CD4-positive, alpha-beta memory T cell (primary cell): ENCODE measurements at regions of chr5 and their contacts with region 1.

Region 1: DNA sequence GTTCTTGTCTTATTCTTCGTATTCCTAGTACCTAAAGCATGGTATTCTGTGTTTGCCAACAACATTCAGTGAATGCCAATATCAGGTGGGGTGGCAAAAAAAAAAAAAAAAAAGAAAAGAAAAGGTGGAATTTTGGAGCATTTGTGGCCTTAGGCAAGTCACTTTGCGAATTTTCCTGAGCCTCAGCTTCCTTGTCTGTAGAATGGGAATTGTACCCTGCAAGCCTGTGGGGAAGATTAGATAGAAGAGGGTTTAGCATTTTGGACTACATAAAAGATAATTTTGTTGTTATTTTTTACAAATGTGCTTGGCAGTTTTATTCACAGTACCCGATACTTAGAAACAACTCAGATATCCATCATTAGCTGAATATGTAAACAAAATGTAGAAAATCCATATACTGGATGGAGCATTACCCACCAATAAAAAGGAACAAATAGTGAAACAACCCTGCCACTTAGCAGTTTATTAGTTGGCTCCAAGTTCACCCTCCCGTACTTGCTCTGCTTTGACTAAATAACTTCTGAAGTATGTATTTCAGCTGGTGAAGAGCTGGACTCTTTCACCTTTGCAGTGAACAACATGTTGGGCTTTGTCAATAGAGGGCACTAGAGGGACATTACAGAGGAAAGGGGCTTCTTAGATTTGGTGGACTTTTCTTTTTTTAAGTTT is 13.6 kb downstream of the UBE2D2 start:
- DNase-seq: peak in 4 of 5 donors; percentile 37 to 45 (median 40)
- H3K4me3 ChIP-seq: no peak overlapping the region
- H3K4me3 Mint-ChIP-seq: peak overlapping the region in 6 of 8 donors; percentile 5 to 67 (median 44)
- H3K27ac ChIP-seq: peak overlapping the region; percentile 45
- H3K27ac Mint-ChIP-seq: peak overlapping the region; percentile 7 to 84 (median 64)
- H3K4me1 ChIP-seq: peaks cover 75% of the 10 kb centered on the region
- H3K4me1 Mint-ChIP-seq: peaks cover 54 to 78% (median 67%) of the 10 kb centered on the region in 4 donors
- H3K27me3 ChIP-seq: no peaks in the 10 kb centered on the region
- H3K27me3 Mint-ChIP-seq: no peaks in the 10 kb centered on the region

Region 2: DNA sequence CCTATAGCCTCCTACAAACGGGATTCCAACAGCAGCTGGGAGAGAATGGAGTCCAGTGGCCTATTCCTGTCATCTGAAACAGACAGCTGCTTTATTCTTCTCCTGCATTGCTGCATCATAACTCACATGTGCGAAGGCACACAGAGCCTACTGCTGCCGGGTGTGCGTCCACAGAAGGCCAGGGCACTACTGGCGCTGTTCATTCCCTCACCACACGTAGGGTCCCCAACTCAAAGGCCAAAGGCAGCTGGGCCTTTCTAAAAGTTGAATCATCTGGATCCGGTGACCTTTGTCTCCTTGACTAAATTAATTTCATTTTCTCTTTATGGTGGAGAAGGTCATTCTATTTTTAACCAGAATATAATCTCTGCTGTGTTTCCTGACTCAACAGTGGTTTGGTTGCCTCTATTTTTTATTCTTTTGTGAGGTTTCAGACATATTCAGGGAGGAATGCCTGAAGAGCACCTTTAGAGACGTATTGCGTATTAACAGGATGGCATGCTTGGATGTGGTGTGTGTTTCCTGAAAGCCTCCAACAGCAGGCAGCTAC is 160.1 kb before region 1 on chr5:
- CTCF ChIA-PET with region 1: no interaction called
- POLR2A ChIA-PET with region 1: no interaction called
- intact Hi-C with region 1: no loop called
- DNase-seq: peak in 2 of 5 donors; percentile 23 to 37
- H3K4me3 ChIP-seq: no peak overlapping the region
- H3K4me3 Mint-ChIP-seq: peak overlapping the region; percentile 0 to 66 (median 38)
- H3K27ac ChIP-seq: peak overlapping the region; percentile 3
- H3K27ac Mint-ChIP-seq: peak overlapping the region in 6 of 7 donors; percentile 33 to 85 (median 66)
- H3K4me1 ChIP-seq: peaks cover 31% of the 10 kb centered on the region
- H3K4me1 Mint-ChIP-seq: peaks cover 13 to 33% (median 23%) of the 10 kb centered on the region in 4 donors
- H3K27me3 ChIP-seq: no peaks in the 10 kb centered on the region
- H3K27me3 Mint-ChIP-seq: no peaks in the 10 kb centered on the region

Region 3: GRCh38 chr5:139495638-139496435 is 78.9 kb before region 1 on chr5:
- CTCF ChIA-PET with region 1: no interaction called
- POLR2A ChIA-PET with region 1: no interaction called
- intact Hi-C with region 1: no loop called
- DNase-seq: no peak
- H3K4me3 ChIP-seq: no peak overlapping the region
- H3K4me3 Mint-ChIP-seq: no peak overlapping the region
- H3K27ac ChIP-seq: no peak overlapping the region
- H3K27ac Mint-ChIP-seq: peak overlapping the region in 3 of 7 donors; percentile 24 to 64 (median 43)
- H3K4me1 ChIP-seq: peaks cover 9% of the 10 kb centered on the region
- H3K4me1 Mint-ChIP-seq: peaks cover 6 to 16% (median 11%) of the 10 kb centered on the region in 4 donors
- H3K27me3 ChIP-seq: no peaks in the 10 kb centered on the region
- H3K27me3 Mint-ChIP-seq: no peaks in the 10 kb centered on the region

Region 4: DNA sequence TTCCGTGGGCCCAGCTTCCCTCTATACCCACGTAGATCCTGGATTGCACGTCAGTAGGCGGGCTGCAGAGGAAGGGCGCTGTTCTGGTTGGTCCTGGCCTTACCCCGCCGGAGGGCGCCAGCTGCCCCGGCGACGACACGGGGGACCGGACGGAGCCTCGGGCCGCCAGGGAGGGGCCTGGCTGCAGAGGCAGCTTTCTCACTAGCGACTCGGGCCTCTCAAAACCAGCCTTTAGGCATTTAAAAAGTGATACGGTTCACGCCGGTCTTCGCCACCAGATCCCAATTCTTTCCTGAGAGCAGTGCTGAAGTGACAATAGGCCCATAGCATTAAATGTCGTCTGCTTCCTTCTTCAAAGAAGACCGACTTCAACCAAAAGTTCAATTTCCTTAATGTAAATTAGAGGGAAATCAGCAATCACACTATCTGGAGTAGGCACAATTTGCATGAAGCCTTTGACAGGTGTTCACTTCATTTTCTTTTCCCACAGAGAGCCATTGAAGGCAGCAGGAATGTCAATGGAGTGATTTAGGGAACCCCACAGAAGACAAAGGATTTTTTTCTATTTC is 31.3 kb before region 1 on chr5:
- CTCF ChIA-PET with region 1: interaction called, 4 read pairs
- POLR2A ChIA-PET with region 1: no interaction called
- intact Hi-C with region 1: loop called (anchors 1 kb)
- DNase-seq: peak; percentile 22 to 44 (median 33)
- H3K4me3 ChIP-seq: no peak overlapping the region
- H3K4me3 Mint-ChIP-seq: peak overlapping the region; percentile 7 to 63 (median 33)
- H3K27ac ChIP-seq: no peak overlapping the region
- H3K27ac Mint-ChIP-seq: peak overlapping the region in 1 of 7 donors; percentile 70
- H3K4me1 ChIP-seq: peaks cover 9% of the 10 kb centered on the region
- H3K4me1 Mint-ChIP-seq: peaks cover 0 to 7% (median 1%) of the 10 kb centered on the region in 4 donors
- H3K27me3 ChIP-seq: no peaks in the 10 kb centered on the region
- H3K27me3 Mint-ChIP-seq: peaks cover 1 to 3% of the 10 kb centered on the region in 2 donors

Region 5: GRCh38 chr5:139588962-139589361 is 14.2 kb after region 1 on chr5:
- CTCF ChIA-PET with region 1: interaction called, 10 read pairs
- POLR2A ChIA-PET with region 1: interaction called, 3 read pairs
- intact Hi-C with region 1: no loop called
- DNase-seq: no peak
- H3K4me3 ChIP-seq: no peak overlapping the region
- H3K4me3 Mint-ChIP-seq: peak overlapping the region in 1 of 8 donors; percentile 34
- H3K27ac ChIP-seq: no peak overlapping the region
- H3K27ac Mint-ChIP-seq: peak overlapping the region in 5 of 7 donors; percentile 3 to 91 (median 61)
- H3K4me1 ChIP-seq: peaks cover 63% of the 10 kb centered on the region
- H3K4me1 Mint-ChIP-seq: peaks cover 32 to 84% (median 57%) of the 10 kb centered on the region in 4 donors
- H3K27me3 ChIP-seq: no peaks in the 10 kb centered on the region
- H3K27me3 Mint-ChIP-seq: no peaks in the 10 kb centered on the region

Region 6: GRCh38 chr5:139611703-139612584 is 37.2 kb after region 1 on chr5:
- CTCF ChIA-PET with region 1: interaction called, 6 read pairs
- POLR2A ChIA-PET with region 1: interaction called, 4 read pairs
- intact Hi-C with region 1: loop called (anchors 5 kb)
- DNase-seq: no peak
- H3K4me3 ChIP-seq: no peak overlapping the region
- H3K4me3 Mint-ChIP-seq: no peak overlapping the region
- H3K27ac ChIP-seq: no peak overlapping the region
- H3K27ac Mint-ChIP-seq: peak overlapping the region in 6 of 7 donors; percentile 4 to 73 (median 56)
- H3K4me1 ChIP-seq: peaks cover 24% of the 10 kb centered on the region
- H3K4me1 Mint-ChIP-seq: peaks cover 6 to 32% (median 22%) of the 10 kb centered on the region in 4 donors
- H3K27me3 ChIP-seq: no peaks in the 10 kb centered on the region
- H3K27me3 Mint-ChIP-seq: no peaks in the 10 kb centered on the region

Region 7: DNA sequence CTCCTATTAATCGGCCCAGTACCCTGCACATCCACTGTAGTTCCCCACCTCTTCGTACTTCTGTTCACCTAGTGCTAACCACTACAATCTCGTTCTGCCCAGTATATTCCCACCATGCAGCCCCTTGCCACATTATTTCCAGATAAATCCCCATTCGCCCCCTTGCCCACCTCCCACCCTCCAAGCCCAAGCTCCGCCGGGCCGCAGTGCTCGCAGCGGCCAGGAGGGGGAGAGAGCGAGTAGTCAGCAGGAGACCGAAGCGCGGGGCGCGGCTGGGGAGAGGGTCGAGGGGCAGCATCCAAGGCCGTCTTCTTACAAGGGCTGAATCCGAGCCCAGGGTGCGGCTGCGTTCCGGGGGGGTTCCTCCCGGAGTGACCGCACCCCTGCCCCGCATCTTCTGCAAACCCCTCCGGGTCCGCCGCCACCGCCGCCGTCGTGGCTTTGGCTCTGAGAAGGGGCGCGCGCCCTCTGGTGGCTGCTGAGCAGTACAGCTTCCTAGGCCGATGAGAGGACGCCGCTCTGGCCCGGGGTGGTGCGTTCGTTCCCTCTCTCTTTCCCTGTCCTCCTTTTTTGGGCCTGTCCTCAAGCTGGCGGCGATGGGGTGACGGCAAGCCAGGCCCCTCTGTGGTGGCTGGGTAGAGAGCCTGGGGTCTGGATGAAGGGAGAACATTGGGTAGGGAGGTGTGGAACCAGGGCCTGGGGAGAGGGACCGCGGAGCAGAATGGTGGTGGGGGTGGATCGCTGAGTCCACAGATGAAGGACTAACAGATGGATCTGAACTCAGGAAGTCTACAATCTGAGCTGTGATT is 190.8 kb after region 1 on chr5:
- CTCF ChIA-PET with region 1: interaction called, 8 read pairs
- POLR2A ChIA-PET with region 1: interaction called, 3 read pairs
- intact Hi-C with region 1: loop called (anchors 1 kb)
- DNase-seq: peak; percentile 78 to 87 (median 84)
- H3K4me3 ChIP-seq: peak overlapping the region; percentile 23 to 56
- H3K4me3 Mint-ChIP-seq: peak overlapping the region; percentile 25 to 72 (median 54)
- H3K27ac ChIP-seq: no peak overlapping the region
- H3K27ac Mint-ChIP-seq: peak overlapping the region in 5 of 7 donors; percentile 31 to 66 (median 52)
- H3K4me1 ChIP-seq: peaks cover 9% of the 10 kb centered on the region
- H3K4me1 Mint-ChIP-seq: peaks cover 5 to 8% (median 7%) of the 10 kb centered on the region in 4 donors
- H3K27me3 ChIP-seq: peaks cover 19% of the 10 kb centered on the region
- H3K27me3 Mint-ChIP-seq: peaks cover 19 to 33% of the 10 kb centered on the region in 2 donors